ENCODE measurements at regions of chr17 and their contacts with region 1.

Region 1: GRCh38 chr17:31373150-31374093 is 18.1 kb upstream of the RAB11FIP4 start:
- DNase-seq: peak; percentile 67
- H3K4me3 ChIP-seq: no peak overlapping the region
- H3K27ac ChIP-seq: no peak overlapping the region
- H3K4me1 ChIP-seq: peaks cover 10% of the 10 kb centered on the region
- H3K27me3 ChIP-seq: no peaks in the 10 kb centered on the region
- CTCF ChIP-seq: peak; percentile 36 to 54
- POLR2A ChIP-seq: no peak

Region 2: GRCh38 chr17:30906101-30906911 is 467.1 kb before region 1 on chr17 and contains the start of gene TEFM:
- CTCF ChIA-PET with region 1: no interaction called
- POLR2A ChIA-PET with region 1: no interaction called
- dilution Hi-C with region 1: no loop called
- intact Hi-C with region 1: loop called (anchors 10 kb)
- DNase-seq: peak; percentile 92
- H3K4me3 ChIP-seq: peak within 1 kb of the TSS; percentile 22 to 85 (median 65)
- H3K27ac ChIP-seq: peak within 1 kb of the TSS; percentile 68
- H3K4me1 ChIP-seq: peaks cover 6% of the 10 kb centered on the region
- H3K27me3 ChIP-seq: no peaks in the 10 kb centered on the region
- CTCF ChIP-seq: no peak
- POLR2A ChIP-seq: peak; percentile 84
- total RNA-seq, gene TEFM: 12.0 and 12.7 TPM in 2 replicates

Region 3: GRCh38 chr17:31216053-31216751 is 157.2 kb before region 1 on chr17:
- CTCF ChIA-PET with region 1: interaction called, 7 read pairs
- POLR2A ChIA-PET with region 1: no interaction called
- dilution Hi-C with region 1: no loop called
- intact Hi-C with region 1: loop called (anchors 1 kb)
- DNase-seq: peak; percentile 68
- H3K4me3 ChIP-seq: no peak overlapping the region
- H3K27ac ChIP-seq: no peak overlapping the region
- H3K4me1 ChIP-seq: no peaks in the 10 kb centered on the region
- H3K27me3 ChIP-seq: no peaks in the 10 kb centered on the region
- CTCF ChIP-seq: peak in 1 of 2 donors; percentile 31
- POLR2A ChIP-seq: no peak

Region 4: GRCh38 chr17:31256936-31257335 is 116.5 kb before region 1 on chr17:
- CTCF ChIA-PET with region 1: interaction called, 4 read pairs
- POLR2A ChIA-PET with region 1: no interaction called
- dilution Hi-C with region 1: no loop called
- intact Hi-C with region 1: loop called (anchors 2 kb)
- DNase-seq: peak; percentile 64
- H3K4me3 ChIP-seq: no peak overlapping the region
- H3K27ac ChIP-seq: peak overlapping the region; percentile 15
- H3K4me1 ChIP-seq: peaks cover 10% of the 10 kb centered on the region
- H3K27me3 ChIP-seq: no peaks in the 10 kb centered on the region
- CTCF ChIP-seq: no peak
- POLR2A ChIP-seq: no peak

Region 5: DNA sequence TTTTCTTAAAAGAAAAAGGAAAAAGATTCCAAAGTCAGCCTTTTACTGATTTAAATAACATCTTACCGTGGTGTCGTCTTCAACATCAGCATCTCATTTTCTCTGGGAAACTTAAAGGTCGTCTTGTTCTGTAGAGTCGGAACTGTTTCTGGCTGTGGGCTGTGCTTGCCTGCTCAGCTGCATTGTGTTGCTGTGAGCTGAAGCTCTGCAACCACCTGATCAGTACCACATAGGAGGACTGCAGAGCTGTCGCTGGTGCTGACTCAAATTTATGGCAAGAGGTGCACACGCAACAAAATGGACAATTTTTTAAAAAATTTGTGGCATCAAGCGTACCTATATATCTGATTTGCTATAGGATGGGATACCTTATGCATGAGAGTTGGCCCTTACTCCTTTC is 76.3 kb before region 1 on chr17 and contains the start of gene OMG:
- CTCF ChIA-PET with region 1: no interaction called
- POLR2A ChIA-PET with region 1: no interaction called
- dilution Hi-C with region 1: no loop called
- intact Hi-C with region 1: no loop called
- DNase-seq: no peak
- H3K4me3 ChIP-seq: no peak within 1 kb of the TSS
- H3K27ac ChIP-seq: no peak within 1 kb of the TSS
- H3K4me1 ChIP-seq: no peaks in the 10 kb centered on the region
- H3K27me3 ChIP-seq: no peaks in the 10 kb centered on the region
- CTCF ChIP-seq: no peak
- POLR2A ChIP-seq: no peak
- total RNA-seq, gene OMG: not detected in 2 replicates

Region 6: DNA sequence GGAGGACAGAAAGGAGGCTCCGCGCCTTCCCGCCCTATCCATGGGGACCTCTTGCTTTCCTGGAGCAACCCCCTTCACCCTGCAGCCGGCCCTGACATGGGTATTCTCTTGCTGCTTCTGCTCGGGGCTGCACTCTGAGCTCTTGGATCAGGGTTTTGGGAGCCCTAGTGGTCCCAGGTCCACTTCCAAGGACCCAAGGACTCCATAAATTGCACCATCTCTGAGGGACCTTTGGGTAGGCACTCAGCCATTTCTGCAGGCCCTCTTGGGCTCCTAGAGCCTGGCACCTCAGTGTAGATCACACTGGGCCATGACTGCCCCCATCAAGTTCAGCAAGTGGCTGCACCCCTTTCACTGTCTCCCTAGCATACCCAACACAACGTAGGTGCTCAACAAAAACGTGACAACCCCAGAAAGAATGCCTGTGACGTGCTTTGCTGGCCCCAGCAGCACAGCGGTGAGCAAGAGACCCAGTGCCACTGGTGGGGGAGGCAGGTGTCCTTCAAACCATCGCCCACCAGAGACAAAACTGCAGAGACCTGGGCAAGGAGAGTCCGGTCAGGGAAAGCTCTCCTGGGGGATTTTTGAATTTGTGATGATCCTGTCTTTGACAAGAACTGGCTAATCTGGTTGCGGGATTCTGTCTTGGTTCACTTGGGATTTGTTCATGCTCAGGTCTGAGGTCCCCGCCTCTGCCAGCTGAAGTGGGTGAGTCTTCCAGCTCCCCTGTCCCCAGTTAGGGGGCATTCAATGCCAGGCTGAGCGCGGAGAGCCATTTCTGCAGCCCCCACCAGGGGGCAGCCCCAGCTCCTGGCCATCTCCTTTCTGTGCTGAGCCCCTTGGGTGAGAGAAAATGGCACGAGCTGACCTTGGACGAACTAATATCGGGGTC is 15.6 kb after region 1 on chr17:
- CTCF ChIA-PET with region 1: interaction called, 11 read pairs
- POLR2A ChIA-PET with region 1: no interaction called
- dilution Hi-C with region 1: no loop called
- intact Hi-C with region 1: no loop called
- DNase-seq: peak; percentile 32
- H3K4me3 ChIP-seq: no peak overlapping the region
- H3K27ac ChIP-seq: no peak overlapping the region
- H3K4me1 ChIP-seq: no peaks in the 10 kb centered on the region
- H3K27me3 ChIP-seq: peaks cover 13 to 17% of the 10 kb centered on the region in 2 experiments
- CTCF ChIP-seq: peak; percentile 78 to 90
- POLR2A ChIP-seq: no peak

Region 7: GRCh38 chr17:31437720-31438420 is 64.4 kb after region 1 on chr17:
- CTCF ChIA-PET with region 1: no interaction called
- POLR2A ChIA-PET with region 1: no interaction called
- dilution Hi-C with region 1: no loop called
- intact Hi-C with region 1: no loop called
- DNase-seq: no peak
- H3K4me3 ChIP-seq: no peak overlapping the region
- H3K27ac ChIP-seq: no peak overlapping the region
- H3K4me1 ChIP-seq: no peaks in the 10 kb centered on the region
- H3K27me3 ChIP-seq: no peaks in the 10 kb centered on the region
- CTCF ChIP-seq: no peak
- POLR2A ChIP-seq: no peak

Measured in endothelial cell of umbilical vein (primary cell).